ENCODE measurements at regions of chr14 and their contacts with region 1.

Region 1: GRCh38 chr14:74612350-74613021 is 449 bp upstream of the LTBP2 start:
- DNase-seq: peak; percentile 65
- H3K4me3 ChIP-seq: peak overlapping the region; percentile 46 to 59
- H3K27ac ChIP-seq: peak overlapping the region; percentile 49 to 55
- H3K4me1 ChIP-seq: no peaks in the 10 kb centered on the region
- H3K27me3 ChIP-seq: peaks cover 4% of the 10 kb centered on the region
- CTCF ChIP-seq: peak; percentile 43 to 88 (median 72)
- POLR2A ChIP-seq: peak; percentile 18

Region 2: GRCh38 chr14:73943083-73943482 is 669.4 kb before region 1 on chr14:
- intact Hi-C with region 1: no loop called
- DNase-seq: peak; percentile 27
- H3K4me3 ChIP-seq: no peak overlapping the region
- H3K27ac ChIP-seq: no peak overlapping the region
- H3K4me1 ChIP-seq: peaks cover 9% of the 10 kb centered on the region
- H3K27me3 ChIP-seq: no peaks in the 10 kb centered on the region
- CTCF ChIP-seq: no peak
- POLR2A ChIP-seq: no peak

Region 3: GRCh38 chr14:74362361-74362915 is 250.0 kb before region 1 on chr14:
- intact Hi-C with region 1: loop called (anchors 10 kb)
- DNase-seq: peak; percentile 71
- H3K4me3 ChIP-seq: no peak overlapping the region
- H3K27ac ChIP-seq: no peak overlapping the region
- H3K4me1 ChIP-seq: no peaks in the 10 kb centered on the region
- H3K27me3 ChIP-seq: no peaks in the 10 kb centered on the region
- CTCF ChIP-seq: peak; percentile 76 to 94 (median 93)
- POLR2A ChIP-seq: no peak

Region 4: GRCh38 chr14:74501135-74501614 is 111.3 kb before region 1 on chr14:
- intact Hi-C with region 1: loop called (anchors 2 kb)
- DNase-seq: peak; percentile 76
- H3K4me3 ChIP-seq: no peak overlapping the region
- H3K27ac ChIP-seq: no peak overlapping the region
- H3K4me1 ChIP-seq: no peaks in the 10 kb centered on the region
- H3K27me3 ChIP-seq: no peaks in the 10 kb centered on the region
- CTCF ChIP-seq: peak; percentile 23 to 75 (median 59)
- POLR2A ChIP-seq: no peak

Region 5: DNA sequence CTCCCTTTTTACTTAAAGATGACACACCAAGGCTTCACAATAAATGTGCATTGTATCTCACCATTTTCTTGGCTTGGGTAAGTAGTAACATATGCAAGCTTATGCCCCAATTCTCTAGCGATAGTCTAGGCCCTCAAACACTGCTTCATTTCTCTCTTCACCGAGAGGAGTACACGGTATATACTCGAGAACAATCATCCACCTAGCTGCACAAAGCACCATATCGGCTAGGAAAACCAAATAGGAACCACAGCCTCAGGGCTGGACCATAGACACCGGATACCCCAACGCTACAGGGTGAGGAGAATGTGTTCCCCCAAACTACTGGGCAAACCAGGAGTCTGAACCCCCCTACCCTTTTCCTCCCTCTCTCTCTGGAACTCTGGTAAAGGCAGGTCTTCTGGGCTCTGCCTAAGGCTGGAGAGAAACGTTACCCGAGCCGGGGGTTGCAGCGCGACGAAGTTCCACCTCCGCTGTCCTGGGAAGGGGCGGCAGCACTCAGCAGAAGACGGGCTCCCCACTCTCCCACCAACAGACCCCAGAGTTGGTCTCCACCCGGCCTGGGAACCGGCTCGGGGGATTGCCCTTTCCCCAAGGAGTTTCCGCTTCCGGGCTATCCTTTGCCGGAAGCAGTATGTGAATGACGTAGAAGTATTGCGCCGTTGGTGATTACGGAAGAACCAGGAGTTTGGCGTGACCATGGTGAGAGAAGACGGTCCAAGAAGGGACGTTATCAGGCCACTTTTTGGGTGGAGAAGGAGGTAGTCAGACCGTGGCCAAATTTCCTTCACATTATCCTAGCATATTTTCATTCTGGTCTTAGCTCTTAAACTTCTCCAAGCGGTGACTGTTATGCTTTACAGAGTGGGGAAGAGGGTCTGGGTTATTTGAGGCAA is 100.3 kb after region 1 on chr14 and contains the starts of genes AREL1 and FCF1:
- intact Hi-C with region 1: loop called (anchors 5 kb)
- DNase-seq: peak; percentile 83
- H3K4me3 ChIP-seq: peak within 1 kb of the TSS; percentile 53 to 72
- H3K27ac ChIP-seq: peak within 1 kb of the TSS; percentile 78 to 81
- H3K4me1 ChIP-seq: peaks cover 4% of the 10 kb centered on the region
- H3K27me3 ChIP-seq: no peaks in the 10 kb centered on the region
- CTCF ChIP-seq: peak in 2 of 4 experiments; percentile 14 to 16
- POLR2A ChIP-seq: peak; percentile 13
- total RNA-seq, gene AREL1: 14.8 to 51.2 TPM
- total RNA-seq, gene FCF1: 24.2 to 26.0 TPM

Region 6: DNA sequence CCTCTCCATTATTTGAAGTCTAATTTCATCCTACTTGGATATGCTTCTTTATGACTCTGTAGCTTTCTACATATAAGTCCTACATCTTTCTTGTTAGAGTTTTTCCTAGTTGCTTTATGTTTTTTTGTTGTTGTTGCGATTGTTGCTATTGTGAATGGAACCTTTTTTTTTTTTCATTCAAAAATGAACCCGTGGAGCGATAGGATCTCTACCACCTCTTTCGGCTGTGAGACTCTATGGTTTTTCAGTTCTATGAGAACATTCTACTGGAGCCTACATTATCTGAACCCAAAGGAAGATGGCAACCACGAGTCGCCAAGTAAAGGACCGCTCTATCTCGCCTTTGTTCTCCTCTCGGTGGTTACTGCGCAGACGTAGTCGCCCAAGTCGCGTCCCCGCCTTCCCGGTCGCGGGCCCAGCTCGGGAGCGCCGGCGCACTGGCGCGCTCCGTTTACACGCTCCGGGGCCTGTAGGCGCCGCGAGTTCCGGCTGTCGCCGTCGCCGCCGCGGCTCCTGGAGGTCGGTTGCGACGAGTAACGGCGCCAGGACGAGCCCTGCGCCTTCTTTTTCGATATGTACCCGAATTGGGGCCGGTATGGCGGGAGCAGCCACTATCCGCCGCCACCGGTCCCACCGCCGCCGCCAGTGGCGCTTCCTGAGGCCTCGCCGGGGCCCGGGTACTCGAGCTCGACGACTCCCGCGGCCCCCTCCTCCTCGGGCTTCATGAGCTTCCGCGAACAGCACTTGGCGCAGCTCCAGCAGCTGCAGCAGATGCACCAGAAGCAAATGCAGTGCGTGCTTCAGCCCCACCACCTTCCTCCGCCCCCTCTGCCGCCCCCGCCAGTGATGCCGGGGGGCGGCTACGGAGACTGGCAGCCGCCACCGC is 150.7 kb after region 1 on chr14 and contains the start of gene YLPM1:
- intact Hi-C with region 1: loop called (anchors 10 kb)
- DNase-seq: peak; percentile 90
- H3K4me3 ChIP-seq: peak within 1 kb of the TSS; percentile 95 to 100
- H3K27ac ChIP-seq: peak within 1 kb of the TSS; percentile 84 to 88
- H3K4me1 ChIP-seq: no peaks in the 10 kb centered on the region
- H3K27me3 ChIP-seq: no peaks in the 10 kb centered on the region
- CTCF ChIP-seq: peak in 3 of 4 experiments; percentile 67 to 82 (median 77)
- POLR2A ChIP-seq: peak; percentile 69
- total RNA-seq, gene YLPM1: 39.0 to 71.9 TPM

Region 7: GRCh38 chr14:74804219-74804826 is 191.8 kb after region 1 on chr14:
- intact Hi-C with region 1: loop called (anchors 5 kb)
- DNase-seq: no peak
- H3K4me3 ChIP-seq: no peak overlapping the region
- H3K27ac ChIP-seq: no peak overlapping the region
- H3K4me1 ChIP-seq: no peaks in the 10 kb centered on the region
- H3K27me3 ChIP-seq: no peaks in the 10 kb centered on the region
- CTCF ChIP-seq: peak in 2 of 4 experiments; percentile 35 to 55
- POLR2A ChIP-seq: no peak

Region 8: GRCh38 chr14:74824997-74825396 is 212.5 kb after region 1 on chr14:
- intact Hi-C with region 1: no loop called
- DNase-seq: no peak
- H3K4me3 ChIP-seq: no peak overlapping the region
- H3K27ac ChIP-seq: no peak overlapping the region
- H3K4me1 ChIP-seq: no peaks in the 10 kb centered on the region
- H3K27me3 ChIP-seq: no peaks in the 10 kb centered on the region
- CTCF ChIP-seq: no peak
- POLR2A ChIP-seq: no peak